ENCODE measurements at regions of chr9 and their contacts with region 1.

Region 1: GRCh38 chr9:94014065-94014654 is 59.0 kb upstream of the BARX1 start:
- DNase-seq: no peak
- ATAC-seq: no peak
- H3K4me3 Mint-ChIP-seq: no peak overlapping the region
- H3K27ac Mint-ChIP-seq: no peak overlapping the region
- H3K4me1 Mint-ChIP-seq: no peaks in the 10 kb centered on the region
- H3K27me3 Mint-ChIP-seq: peaks cover 5% of the 10 kb centered on the region

Region 2: GRCh38 chr9:93761822-93762221 is 252.3 kb before region 1 on chr9:
- CTCF ChIA-PET with region 1: no interaction called
- DNase-seq: no peak
- ATAC-seq: no peak
- H3K4me3 Mint-ChIP-seq: no peak overlapping the region
- H3K27ac Mint-ChIP-seq: no peak overlapping the region
- H3K4me1 Mint-ChIP-seq: no peaks in the 10 kb centered on the region
- H3K27me3 Mint-ChIP-seq: peaks cover 4% of the 10 kb centered on the region

Region 3: DNA sequence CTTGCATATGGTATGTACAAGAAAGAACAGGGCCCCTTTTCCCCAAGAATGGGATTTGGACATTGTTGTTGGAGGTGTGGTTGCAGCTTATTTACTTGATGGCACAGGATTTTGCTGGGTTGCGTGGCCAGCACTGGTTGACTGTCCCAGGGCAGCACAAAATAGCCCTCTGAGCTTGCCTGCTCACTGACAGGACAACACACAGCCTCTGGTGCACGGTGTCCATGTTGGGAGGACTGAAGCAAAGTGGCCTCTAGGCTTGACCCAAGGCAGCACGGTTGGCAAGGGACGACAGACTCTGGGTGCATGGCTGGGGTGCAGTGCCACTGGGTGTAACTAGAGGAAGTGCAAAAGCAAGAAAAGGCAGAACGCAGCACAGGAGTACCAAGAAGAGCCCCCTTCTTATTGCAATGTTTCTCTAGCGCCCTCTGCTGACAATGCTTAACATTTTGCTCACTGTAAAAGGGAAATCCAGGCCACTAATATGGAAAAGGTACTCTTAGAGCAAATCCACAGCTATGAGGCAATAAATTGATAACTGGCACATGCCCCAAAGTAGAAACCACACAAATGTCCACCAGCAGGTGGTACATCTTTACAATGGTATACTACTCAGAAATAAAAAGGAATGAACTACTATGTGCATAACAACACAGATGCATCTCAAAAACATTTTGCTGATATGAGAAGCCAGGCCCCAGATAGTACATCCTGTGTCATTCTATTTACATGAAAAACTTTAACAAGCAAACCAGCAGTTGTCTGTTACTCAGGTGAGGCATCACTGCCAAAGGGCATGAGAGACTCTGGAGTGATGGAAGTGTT is 11.6 kb before region 1 on chr9:
- CTCF ChIA-PET with region 1: interaction called, 17 read pairs
- DNase-seq: peak; percentile 50
- ATAC-seq: no peak
- H3K4me3 Mint-ChIP-seq: no peak overlapping the region
- H3K27ac Mint-ChIP-seq: no peak overlapping the region
- H3K4me1 Mint-ChIP-seq: no peaks in the 10 kb centered on the region
- H3K27me3 Mint-ChIP-seq: peaks cover 22% of the 10 kb centered on the region